ENCODE measurements at regions of chr11 and their contacts with region 1.

Region 1: DNA sequence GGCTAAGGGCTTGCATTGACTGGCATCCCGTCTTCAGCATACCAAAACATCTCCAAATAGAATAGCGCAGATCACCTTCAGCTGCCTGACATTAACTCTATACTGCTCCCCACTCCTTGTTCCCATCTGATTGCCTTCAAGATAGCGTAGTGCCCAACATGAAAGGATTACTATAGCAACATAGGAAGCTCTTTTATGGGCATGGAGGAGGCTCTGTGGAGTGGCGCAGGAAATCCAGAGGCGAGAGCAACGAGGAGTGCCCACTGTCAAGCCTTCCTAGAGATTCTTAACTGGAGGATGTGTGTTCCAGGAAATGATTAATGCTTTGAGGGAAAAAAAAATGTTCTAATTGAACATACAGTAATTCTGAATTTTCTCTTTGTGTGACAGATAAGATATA is 213.3 kb downstream of the CADM1 start:
- DNase-seq: no peak
- ATAC-seq: peak; percentile 31

Region 2: GRCh38 chr11:115180272-115180671 is 110.6 kb before region 1 on chr11:
- intact Hi-C with region 1: loop called (anchors 10 kb)
- DNase-seq: no peak
- ATAC-seq: no peak